Kidney (tissue), 22 donors: ENCODE measurements at regions of chrX and their contacts with region 1.

Region 1: DNA sequence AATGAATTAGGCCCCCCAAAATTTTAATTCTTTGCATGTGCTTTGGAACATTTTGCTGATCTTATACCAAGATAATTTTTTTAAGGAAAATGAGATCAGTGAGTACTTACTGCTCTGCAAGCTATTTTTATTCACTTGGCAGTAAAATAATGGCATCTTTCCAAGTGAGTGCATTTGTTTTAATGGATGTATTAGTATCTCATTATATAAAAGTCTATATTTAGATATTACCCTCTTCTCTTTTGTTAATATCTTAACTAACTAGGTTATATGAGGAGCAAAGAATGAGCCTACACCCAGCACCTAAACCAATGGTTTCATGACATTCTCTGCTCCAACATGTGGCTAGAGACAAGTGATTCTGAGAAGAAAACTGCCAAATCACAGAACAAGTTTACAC is 21.1 kb upstream of the ARAF start:
- DNase-seq: peak in 1 of 5 donors; percentile 14
- H3K4me3 ChIP-seq: no peak overlapping the region
- H3K27ac ChIP-seq: peak overlapping the region in 1 of 2 donors; percentile 47
- H3K4me1 ChIP-seq: peaks cover 0 to 3% (median 0%) of the 10 kb centered on the region in 3 donors
- H3K27me3 ChIP-seq: no peaks in the 10 kb centered on the region
- CTCF ChIP-seq: no peak

Region 2: DNA sequence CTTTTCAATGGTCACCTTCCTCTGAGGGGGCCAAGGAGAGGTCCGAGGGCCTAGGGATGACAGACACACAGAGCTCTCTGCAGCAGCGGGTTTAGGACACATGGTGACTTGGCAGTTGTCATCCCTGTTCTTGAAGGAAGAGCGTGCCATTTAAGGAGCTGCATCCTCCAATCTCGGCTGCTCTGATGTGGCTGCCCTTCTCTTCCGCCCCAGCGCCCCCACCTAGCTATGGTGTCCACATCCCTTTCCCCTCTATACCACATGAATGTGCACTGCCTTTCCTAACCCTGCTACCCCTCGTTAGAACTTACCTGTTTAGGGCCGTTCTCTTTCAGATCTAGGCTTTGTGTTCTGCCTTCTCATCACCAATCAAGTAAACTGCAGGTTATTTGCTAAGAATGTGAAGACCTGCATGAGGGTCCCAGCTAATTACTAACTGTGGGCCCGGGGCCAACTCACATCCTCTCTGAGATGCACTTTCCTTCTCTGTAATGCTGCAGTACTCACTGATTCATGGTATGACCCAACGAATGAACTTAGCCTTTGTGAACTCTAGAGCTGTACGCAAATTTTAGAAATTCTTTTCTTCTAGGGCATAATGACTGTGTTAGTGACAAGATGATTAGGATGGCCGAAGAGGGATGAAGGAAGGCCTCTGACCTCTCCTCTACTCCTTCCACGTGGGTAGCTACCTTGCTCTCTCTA is 928.0 kb before region 1 on chrX:
- intact Hi-C with region 1: loop called (anchors 10 kb)
- DNase-seq: no peak
- H3K4me3 ChIP-seq: no peak overlapping the region
- H3K27ac ChIP-seq: no peak overlapping the region
- H3K4me1 ChIP-seq: no peaks in the 10 kb centered on the region
- H3K27me3 ChIP-seq: no peaks in the 10 kb centered on the region
- CTCF ChIP-seq: no peak

Region 3: GRCh38 chrX:47321386-47321785 is 218.5 kb before region 1 on chrX:
- intact Hi-C with region 1: no loop called
- DNase-seq: peak; percentile 76 to 88 (median 82)
- H3K4me3 ChIP-seq: no peak overlapping the region
- H3K27ac ChIP-seq: no peak overlapping the region
- H3K4me1 ChIP-seq: no peaks in the 10 kb centered on the region
- H3K27me3 ChIP-seq: no peaks in the 10 kb centered on the region
- CTCF ChIP-seq: no peak

Region 4: DNA sequence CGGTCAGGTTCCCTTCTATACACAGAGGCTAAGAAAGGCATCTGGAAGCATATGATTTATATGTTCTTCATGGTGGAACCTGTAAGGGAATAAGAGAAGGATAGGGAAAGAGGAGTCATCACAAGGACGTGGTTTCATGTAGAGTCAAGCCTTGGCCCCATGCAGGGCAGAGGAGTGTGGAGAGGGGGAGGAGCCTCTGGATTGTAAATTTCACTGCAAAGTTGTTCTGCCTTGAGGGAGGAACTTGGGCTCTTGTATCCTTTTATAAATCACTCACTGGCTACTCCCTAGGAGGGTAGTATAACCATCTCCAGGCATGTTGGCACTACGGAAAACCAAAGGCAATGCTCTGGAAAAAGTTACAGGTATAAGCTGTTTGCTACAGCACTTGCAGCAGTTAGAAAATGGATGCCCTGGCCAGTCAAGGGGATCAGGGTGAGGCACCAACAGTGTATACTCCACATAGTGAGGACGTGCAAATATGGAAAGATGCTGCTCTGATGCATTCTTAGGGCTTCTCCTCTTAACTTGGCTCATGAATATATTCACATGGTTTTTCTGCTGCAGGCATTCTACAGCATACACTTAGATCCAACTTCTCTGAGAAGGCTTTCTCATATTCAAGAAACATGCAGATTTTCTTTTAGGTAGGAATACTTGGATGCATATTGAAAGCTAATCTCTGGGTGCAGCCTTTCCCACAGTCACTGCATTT is 236.6 kb after region 1 on chrX:
- intact Hi-C with region 1: no loop called
- DNase-seq: peak in 3 of 5 donors; percentile 16 to 26 (median 19)
- H3K4me3 ChIP-seq: no peak overlapping the region
- H3K27ac ChIP-seq: no peak overlapping the region
- H3K4me1 ChIP-seq: no peaks in the 10 kb centered on the region
- H3K27me3 ChIP-seq: no peaks in the 10 kb centered on the region
- CTCF ChIP-seq: no peak